Mammary epithelial cell (primary cell): ENCODE measurements at regions of chr9 and their contacts with region 1.

Region 1: DNA sequence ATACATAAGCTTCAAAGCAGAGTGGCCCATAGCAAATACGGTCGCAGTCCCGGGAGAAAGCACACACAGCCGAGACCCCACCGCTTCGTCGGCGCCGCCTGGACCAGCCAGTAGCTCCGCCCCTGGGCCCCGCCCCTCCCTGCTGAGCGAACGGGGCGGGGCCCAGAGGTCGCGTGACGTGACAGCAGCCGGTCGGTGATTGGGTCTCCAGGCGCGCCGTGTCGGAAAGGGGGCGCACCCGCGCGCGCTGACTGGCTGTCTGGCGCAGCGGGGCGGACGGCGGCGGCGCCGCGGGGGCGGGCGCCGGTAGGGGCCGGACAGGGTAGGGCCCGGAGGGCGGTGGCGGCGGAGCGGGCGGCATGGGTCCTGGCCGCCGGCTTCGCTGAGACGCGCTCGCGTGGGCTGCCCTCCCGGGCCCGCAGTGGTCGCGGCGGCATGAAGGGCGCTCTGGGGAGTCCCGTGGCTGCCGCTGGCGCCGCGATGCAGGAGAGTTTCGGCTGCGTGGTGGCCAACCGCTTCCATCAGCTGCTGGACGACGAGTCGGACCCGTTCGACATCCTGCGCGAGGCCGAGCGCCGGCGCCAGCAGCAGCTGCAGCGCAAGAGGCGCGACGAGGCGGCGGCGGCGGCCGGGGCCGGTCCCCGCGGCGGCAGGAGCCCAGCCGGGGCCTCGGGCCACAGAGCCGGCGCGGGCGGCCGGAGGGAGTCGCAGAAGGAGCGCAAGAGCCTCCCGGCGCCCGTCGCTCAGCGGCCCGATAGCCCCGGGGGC is at the start of gene HABP4:
- DNase-seq: peak; percentile 91
- H3K4me3 ChIP-seq: peak within 1 kb of the TSS; percentile 68 to 91 (median 90)
- H3K27ac ChIP-seq: peak within 1 kb of the TSS; percentile 56
- H3K4me1 ChIP-seq: peaks cover 8% of the 10 kb centered on the region
- H3K27me3 ChIP-seq: no peaks in the 10 kb centered on the region
- CTCF ChIP-seq: no peak
- total RNA-seq, gene HABP4: 7.7 to 9.6 TPM

Region 2: GRCh38 chr9:96383165-96383942 is 66.7 kb before region 1 on chr9 and contains the start of gene SLC35D2:
- CTCF ChIA-PET with region 1: no interaction called
- dilution Hi-C with region 1: no loop called
- in situ Hi-C with region 1: no loop called
- intact Hi-C with region 1: loop called (anchors 5 kb)
- DNase-seq: peak; percentile 56
- H3K4me3 ChIP-seq: peak within 1 kb of the TSS; percentile 66 to 81 (median 72)
- H3K27ac ChIP-seq: peak within 1 kb of the TSS; percentile 25
- H3K4me1 ChIP-seq: peaks cover 4% of the 10 kb centered on the region
- H3K27me3 ChIP-seq: no peaks in the 10 kb centered on the region
- CTCF ChIP-seq: no peak
- total RNA-seq, gene SLC35D2: 16.7 to 20.9 TPM

Region 3: DNA sequence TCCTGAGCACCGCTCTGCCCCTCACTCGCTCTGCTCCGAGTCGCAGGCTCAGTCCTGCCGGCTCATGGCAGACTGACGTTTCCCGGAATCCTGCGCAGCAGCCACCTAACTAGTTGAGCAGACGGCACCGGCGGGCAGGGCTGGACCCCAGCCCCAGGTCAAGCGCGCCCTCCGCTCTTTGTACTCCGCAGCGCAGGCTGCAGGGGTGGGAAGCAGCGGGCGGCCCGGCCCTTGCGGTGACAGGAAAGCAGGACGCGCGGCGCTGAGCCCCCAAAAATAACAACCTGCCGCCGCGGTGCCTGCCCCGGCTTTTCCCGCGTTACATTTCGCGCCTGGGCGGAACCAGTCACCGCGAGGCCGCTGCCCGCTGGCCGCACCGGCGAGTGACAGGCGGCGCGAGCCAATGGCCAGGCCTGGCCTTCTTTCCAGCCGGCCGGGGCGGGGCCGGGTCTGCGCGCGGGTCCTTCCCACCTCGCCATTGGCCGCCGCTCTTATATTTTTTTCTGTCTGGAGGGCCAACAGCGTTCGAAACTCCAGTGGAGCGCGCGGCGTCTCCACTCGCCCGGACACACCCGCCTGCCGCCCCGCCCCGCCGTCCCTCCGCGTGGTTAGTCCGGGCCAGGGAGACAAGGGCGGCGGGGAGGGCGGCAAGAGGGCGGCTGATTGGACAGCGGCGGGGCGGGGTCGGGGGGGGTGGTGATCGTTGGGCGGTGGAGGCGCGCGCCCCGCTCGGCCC is 31.8 kb before region 1 on chr9 and contains the start of gene ZNF367:
- CTCF ChIA-PET with region 1: no interaction called
- dilution Hi-C with region 1: no loop called
- in situ Hi-C with region 1: no loop called
- intact Hi-C with region 1: loop called (anchors 1 kb)
- DNase-seq: peak; percentile 99
- H3K4me3 ChIP-seq: peak within 1 kb of the TSS; percentile 62 to 95 (median 83)
- H3K27ac ChIP-seq: peak within 1 kb of the TSS; percentile 90
- H3K4me1 ChIP-seq: peaks cover 18% of the 10 kb centered on the region
- H3K27me3 ChIP-seq: no peaks in the 10 kb centered on the region
- CTCF ChIP-seq: no peak
- total RNA-seq, gene ZNF367: 1.5 to 7.9 TPM

Region 4: DNA sequence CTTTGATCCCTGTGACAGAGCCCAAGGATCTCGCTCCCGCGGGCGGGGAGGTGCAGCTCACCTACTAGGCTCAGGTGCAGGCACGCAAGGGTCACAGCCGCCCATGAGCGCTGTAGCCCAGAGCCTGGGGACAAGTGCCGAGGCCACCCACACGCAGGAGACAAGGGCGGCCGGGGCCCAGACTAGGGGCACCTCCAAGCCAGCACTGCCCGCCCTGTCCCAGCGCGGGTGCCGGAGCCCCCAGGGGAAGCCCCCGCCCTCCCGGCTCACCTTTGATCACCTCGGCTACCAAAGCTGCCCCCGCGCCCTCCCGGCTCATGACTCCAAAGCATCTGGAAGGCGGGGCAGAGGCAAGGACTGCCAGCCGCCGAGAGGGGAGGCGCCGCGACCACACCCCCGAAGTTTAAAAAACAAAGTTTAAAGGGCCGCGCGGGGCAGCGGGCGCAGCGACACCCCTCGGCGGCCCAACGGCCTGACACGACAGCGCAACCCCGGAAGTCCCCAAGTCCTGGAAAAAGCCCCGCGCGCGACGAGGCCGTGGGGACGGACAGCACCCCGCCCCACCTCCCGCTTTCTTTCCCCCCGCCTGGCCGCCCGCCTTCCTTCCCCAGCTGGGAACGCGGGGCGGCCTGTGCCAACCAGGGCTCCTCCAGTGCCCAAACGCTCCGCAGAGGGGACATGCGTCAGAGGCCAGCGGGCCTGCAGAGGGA is 116.6 kb after region 1 on chr9:
- CTCF ChIA-PET with region 1: no interaction called
- dilution Hi-C with region 1: no loop called
- in situ Hi-C with region 1: no loop called
- intact Hi-C with region 1: loop called (anchors 5 kb)
- DNase-seq: peak; percentile 51
- H3K4me3 ChIP-seq: peak overlapping the region; percentile 69 to 96 (median 84)
- H3K27ac ChIP-seq: peak overlapping the region; percentile 35
- H3K4me1 ChIP-seq: peaks cover 16% of the 10 kb centered on the region
- H3K27me3 ChIP-seq: no peaks in the 10 kb centered on the region
- CTCF ChIP-seq: peak; percentile 17 to 69

Region 5: GRCh38 chr9:96619491-96620154 is 169.6 kb after region 1 on chr9 and contains the start of gene CDC14B:
- CTCF ChIA-PET with region 1: no interaction called
- dilution Hi-C with region 1: no loop called
- in situ Hi-C with region 1: no loop called
- intact Hi-C with region 1: loop called (anchors 2 kb)
- DNase-seq: peak; percentile 88
- H3K4me3 ChIP-seq: peak within 1 kb of the TSS; percentile 66 to 70 (median 70)
- H3K27ac ChIP-seq: peak within 1 kb of the TSS; percentile 19
- H3K4me1 ChIP-seq: peaks cover 8% of the 10 kb centered on the region
- H3K27me3 ChIP-seq: no peaks in the 10 kb centered on the region
- CTCF ChIP-seq: peak in 1 of 2 donors; percentile 26
- total RNA-seq, gene CDC14B: 9.4 to 14.5 TPM

Region 6: DNA sequence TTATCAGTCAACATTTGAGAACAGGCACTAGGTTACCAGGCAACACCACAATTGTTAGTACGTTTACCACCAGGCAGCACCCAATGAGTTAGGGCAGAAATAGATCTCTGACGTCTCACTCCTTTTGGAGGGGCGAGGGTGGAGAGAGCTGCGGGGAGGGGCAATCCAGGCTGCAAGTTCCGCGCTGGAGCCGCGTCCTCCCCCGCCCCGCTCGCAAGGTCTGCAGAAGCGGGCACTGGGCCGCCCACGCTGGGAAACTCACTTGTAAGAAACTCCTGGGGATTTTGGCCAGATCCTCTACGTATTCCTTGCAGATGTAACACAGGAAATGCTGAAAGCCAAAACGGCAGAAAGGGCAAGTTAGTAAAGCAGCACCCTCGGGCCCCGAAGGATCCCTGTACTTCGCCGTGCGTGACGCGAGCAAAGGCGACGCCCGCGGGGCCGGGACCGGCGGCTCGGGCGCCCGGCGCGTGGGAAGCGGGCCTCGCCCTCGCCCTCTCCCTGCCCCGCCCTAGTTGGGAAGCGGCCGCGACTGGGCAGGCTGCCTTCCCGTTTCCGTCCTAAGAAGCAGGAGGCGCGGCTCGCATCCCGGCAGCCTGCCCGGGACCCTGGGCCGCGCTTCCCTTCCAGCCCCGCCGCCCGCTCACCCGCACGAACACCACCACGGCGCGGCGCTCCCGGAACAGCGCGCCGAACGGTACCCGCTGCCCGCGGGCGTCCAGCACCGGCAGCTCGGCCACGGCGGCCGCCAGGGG is 204.6 kb after region 1 on chr9:
- CTCF ChIA-PET with region 1: no interaction called
- dilution Hi-C with region 1: no loop called
- in situ Hi-C with region 1: loop called (anchors 10 to 25 kb)
- intact Hi-C with region 1: loop called (anchors 2 kb)
- DNase-seq: peak; percentile 79
- H3K4me3 ChIP-seq: peak overlapping the region; percentile 48 to 74 (median 66)
- H3K27ac ChIP-seq: peak overlapping the region; percentile 89
- H3K4me1 ChIP-seq: peaks cover 8% of the 10 kb centered on the region
- H3K27me3 ChIP-seq: no peaks in the 10 kb centered on the region
- CTCF ChIP-seq: peak in 1 of 2 donors; percentile 21